Natural killer cell (primary cell): ENCODE measurements at regions of chr12 and their contacts with region 1.

Region 1: GRCh38 chr12:63779498-63780481 is at the start of gene RXYLT1:
- DNase-seq: peak; percentile 80 to 87
- ATAC-seq: peak; percentile 93 to 98 (median 95)
- H3K4me3 ChIP-seq: peak within 1 kb of the TSS; percentile 91
- H3K4me3 Mint-ChIP-seq: peak within 1 kb of the TSS; percentile 97
- H3K27ac ChIP-seq: peak within 1 kb of the TSS; percentile 83
- H3K27ac Mint-ChIP-seq: peak within 1 kb of the TSS; percentile 93
- H3K4me1 ChIP-seq: peaks cover 6% of the 10 kb centered on the region
- H3K4me1 Mint-ChIP-seq: peaks cover 11 to 19% of the 10 kb centered on the region in 2 donors
- H3K27me3 ChIP-seq: no peaks in the 10 kb centered on the region
- H3K27me3 Mint-ChIP-seq: peaks cover 7 to 17% of the 10 kb centered on the region in 2 donors
- CTCF ChIP-seq: no peak
- total RNA-seq, gene RXYLT1: 5.8 to 10.6 (median 7.0) TPM

Region 2: GRCh38 chr12:64222009-64222765 is 442.4 kb after region 1 on chr12 and contains the start of gene KICS2:
- intact Hi-C with region 1: loop called (anchors 10 kb)
- DNase-seq: peak; percentile 92 to 97
- ATAC-seq: peak; percentile 89 to 97 (median 92)
- H3K4me3 ChIP-seq: peak within 1 kb of the TSS; percentile 94
- H3K4me3 Mint-ChIP-seq: peak within 1 kb of the TSS; percentile 98
- H3K27ac ChIP-seq: peak within 1 kb of the TSS; percentile 94
- H3K27ac Mint-ChIP-seq: peak within 1 kb of the TSS; percentile 96 to 97
- H3K4me1 ChIP-seq: peaks cover 12% of the 10 kb centered on the region
- H3K4me1 Mint-ChIP-seq: peaks cover 26 to 37% of the 10 kb centered on the region in 2 donors
- H3K27me3 ChIP-seq: no peaks in the 10 kb centered on the region
- H3K27me3 Mint-ChIP-seq: peaks cover 15 to 21% of the 10 kb centered on the region in 2 donors
- CTCF ChIP-seq: no peak
- total RNA-seq, gene KICS2: 14.7 to 19.5 (median 15.6) TPM